ENCODE measurements at regions of chr16 and their contacts with region 1.

Region 1: DNA sequence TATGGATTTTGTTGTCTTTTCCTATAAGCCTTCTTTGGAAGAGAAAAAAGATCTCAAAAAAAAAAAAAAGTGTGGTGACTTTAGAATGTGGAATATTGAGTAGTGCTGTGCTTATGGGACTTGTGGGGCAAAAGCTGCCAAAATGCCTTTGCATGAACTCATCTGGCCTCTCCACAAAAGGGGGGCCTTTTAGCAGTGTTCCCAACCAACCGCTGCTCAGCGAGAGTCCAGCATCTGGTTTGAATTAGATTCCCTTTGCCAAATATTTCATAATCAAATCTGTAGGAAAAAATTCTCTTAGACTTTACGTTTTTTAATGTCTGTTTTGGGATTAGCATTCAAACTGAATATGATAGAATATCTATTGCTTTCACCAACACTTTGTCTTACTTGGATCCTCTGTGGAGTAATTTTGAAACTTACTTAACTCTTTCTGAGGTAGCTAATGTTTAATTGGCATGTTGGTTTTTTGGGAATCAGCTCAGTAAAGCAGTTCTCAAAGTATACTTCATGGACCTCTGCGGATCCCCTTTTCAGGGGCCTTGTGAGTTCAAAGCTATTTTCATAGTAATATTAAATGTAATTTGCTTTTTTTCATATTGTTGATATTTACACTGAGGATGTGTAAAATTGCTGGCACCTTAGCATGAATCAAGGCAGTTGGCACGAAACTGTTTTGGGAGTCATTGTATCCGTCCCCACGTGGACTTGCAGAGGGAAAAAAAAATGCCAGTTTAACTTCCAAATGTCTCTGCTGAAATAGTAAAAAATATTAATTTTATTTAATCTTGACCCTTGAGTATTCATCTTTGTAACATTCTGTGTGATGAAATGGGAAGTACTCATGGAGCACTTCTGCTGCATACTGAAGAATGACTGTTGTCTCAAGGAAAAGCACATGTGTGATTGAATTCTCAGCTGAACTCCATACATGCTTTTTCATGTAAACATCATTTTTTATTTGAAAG is 34.7 kb upstream of the VPS4A start:
- DNase-seq: peak; percentile 92
- H3K4me3 ChIP-seq: peak overlapping the region in 1 of 4 donors; percentile 17
- H3K27ac ChIP-seq: peak overlapping the region; percentile 51 to 73 (median 60)
- H3K4me1 ChIP-seq: peaks cover 3 to 49% (median 34%) of the 10 kb centered on the region in 4 donors
- H3K27me3 ChIP-seq: no peaks in the 10 kb centered on the region
- CTCF ChIP-seq: no peak
- EP300 ChIP-seq: no peak
- POLR2A ChIP-seq: no peak

Region 2: DNA sequence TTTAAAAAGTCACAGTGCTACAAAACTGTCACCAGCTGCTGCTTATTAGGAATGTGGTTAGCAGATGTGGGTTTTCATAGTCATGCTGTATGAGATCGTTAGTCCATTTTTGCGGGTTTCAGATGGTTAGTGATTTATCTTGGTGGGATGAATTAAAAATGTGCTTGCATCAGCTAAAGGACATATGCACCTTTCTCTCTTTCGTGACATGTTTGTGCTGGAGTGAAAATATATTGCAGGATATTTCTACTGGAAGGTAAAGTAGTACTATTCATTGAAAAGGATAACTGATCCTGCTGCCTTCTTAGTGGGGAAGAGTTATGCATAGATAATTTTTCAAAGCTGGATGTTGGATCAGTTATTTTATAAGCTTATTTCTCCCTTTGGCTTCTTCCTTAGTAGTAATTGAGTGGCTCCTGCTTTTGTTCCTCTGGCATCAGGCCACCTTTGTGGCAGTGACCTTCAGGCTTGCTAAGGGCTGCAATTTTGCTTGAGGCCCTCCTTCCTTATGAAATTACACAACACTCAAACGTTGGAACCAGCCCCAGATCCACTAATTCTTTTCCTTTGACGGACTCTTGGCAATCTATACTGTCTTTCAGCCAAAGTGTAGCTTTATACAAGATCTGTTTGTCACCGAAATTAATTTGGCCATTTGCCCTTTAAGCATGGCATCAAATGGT is 97.0 kb before region 1 on chr16:
- intact Hi-C with region 1: loop called (anchors 10 kb)
- DNase-seq: peak; percentile 93
- H3K4me3 ChIP-seq: peak overlapping the region in 1 of 4 donors; percentile 5
- H3K27ac ChIP-seq: peak overlapping the region; percentile 73 to 83 (median 80)
- H3K4me1 ChIP-seq: peaks cover 24 to 74% (median 63%) of the 10 kb centered on the region in 4 donors
- H3K27me3 ChIP-seq: no peaks in the 10 kb centered on the region
- CTCF ChIP-seq: no peak
- EP300 ChIP-seq: no peak
- POLR2A ChIP-seq: no peak

Region 3: DNA sequence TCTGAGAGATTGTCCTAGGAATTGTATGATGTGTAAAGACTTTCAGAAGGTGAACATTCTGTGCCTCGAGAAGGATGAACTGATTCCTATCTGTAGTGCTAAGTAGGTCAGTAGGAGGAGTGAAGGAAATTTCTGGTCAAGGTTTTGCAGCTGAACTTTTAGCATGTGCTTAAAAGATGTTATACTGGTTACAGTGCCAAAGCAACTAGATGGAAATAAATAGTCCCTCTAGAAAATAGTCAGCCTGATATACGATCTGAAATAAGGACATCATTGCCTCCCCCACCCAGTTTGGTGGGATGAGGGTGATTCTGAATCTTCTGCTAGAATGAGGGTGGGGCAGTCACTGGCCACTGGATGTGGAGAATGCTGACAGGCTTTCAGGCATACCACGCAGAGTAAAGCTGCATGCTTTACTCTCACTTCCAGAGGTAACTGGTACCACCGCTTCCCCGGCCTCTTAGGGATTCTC is 22.5 kb before region 1 on chr16:
- intact Hi-C with region 1: no loop called
- DNase-seq: peak; percentile 90
- H3K4me3 ChIP-seq: no peak overlapping the region
- H3K27ac ChIP-seq: peak overlapping the region; percentile 69 to 75 (median 73)
- H3K4me1 ChIP-seq: peaks cover 5 to 40% (median 29%) of the 10 kb centered on the region in 4 donors
- H3K27me3 ChIP-seq: no peaks in the 10 kb centered on the region
- CTCF ChIP-seq: no peak
- EP300 ChIP-seq: no peak
- POLR2A ChIP-seq: no peak

Measured in esophagus muscularis mucosa (tissue), 4 donors.